ENCODE measurements at regions of chr14 and their contacts with region 1.

Region 1: DNA sequence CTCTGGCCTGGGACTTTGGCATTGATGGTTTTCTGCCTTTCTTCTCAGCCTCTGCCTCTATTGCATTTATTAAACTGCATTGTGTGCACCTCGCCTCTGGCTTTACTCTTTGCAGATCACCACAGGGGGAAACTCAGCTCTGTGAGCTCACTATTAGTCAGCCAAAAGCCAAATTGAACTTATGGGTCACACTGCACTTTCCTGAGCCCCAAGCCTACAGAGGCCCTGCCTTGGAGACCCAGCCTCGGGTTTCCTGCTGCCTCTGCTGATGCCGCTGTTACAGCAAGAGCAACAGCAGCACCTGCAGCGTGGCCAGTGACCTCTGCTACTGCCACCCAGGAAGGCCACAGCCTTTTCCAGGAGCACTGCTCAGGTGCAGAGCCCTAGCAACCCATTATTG is 122.5 kb downstream of the DAD1 start:
- DNase-seq: no peak
- ATAC-seq: no peak
- H3K4me3 ChIP-seq: no peak overlapping the region
- H3K27ac ChIP-seq: no peak overlapping the region
- H3K4me1 ChIP-seq: peaks cover 0 to 20% (median 7%) of the 10 kb centered on the region in 9 donors
- H3K27me3 ChIP-seq: no peaks in the 10 kb centered on the region
- CTCF ChIP-seq: no peak

Region 2: DNA sequence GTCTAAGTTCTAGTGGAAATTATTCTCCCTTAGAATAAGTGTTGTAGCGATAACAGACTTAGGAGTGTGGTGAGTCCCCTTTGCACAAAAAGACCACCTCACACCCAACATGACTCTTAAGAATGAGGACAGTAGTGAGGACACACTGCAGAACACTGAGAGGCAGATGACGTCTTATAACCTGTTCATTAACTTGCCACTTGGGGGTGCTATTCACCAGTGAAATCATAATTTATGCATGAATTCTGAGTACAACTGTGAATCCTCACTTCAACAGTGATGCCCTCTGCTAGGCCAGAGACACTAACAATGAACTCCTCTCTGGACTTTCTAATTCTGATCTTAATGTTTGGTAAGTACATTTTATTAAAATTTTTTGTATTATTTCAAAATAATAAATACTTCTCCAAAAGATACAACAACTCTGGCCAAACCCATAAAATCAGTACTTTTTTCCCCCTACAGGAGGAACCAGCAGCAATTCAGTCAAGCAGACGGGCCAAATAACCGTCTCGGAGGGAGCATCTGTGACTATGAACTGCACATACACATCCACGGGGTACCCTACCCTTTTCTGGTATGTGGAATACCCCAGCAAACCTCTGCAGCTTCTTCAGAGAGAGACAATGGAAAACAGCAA is 152.2 kb before region 1 on chr14:
- intact Hi-C with region 1: loop called in 1 of 10 experiments (anchors 10 kb)
- DNase-seq: peak in 1 of 2 donors; percentile 29
- ATAC-seq: peak in 6 of 8 donors; percentile 63 to 76 (median 70)
- H3K4me3 ChIP-seq: no peak overlapping the region
- H3K27ac ChIP-seq: no peak overlapping the region
- H3K4me1 ChIP-seq: no peaks in the 10 kb centered on the region
- H3K27me3 ChIP-seq: peaks cover 0 to 9% (median 0%) of the 10 kb centered on the region in 7 donors
- CTCF ChIP-seq: peak; percentile 32 to 82 (median 69)

Region 3: GRCh38 chr14:22397221-22397737 is 69.2 kb before region 1 on chr14:
- intact Hi-C with region 1: loop called in 3 of 10 experiments (anchors 2 to 5 kb)
- DNase-seq: no peak
- ATAC-seq: no peak
- H3K4me3 ChIP-seq: no peak overlapping the region
- H3K27ac ChIP-seq: no peak overlapping the region
- H3K4me1 ChIP-seq: peaks cover 0 to 7% (median 0%) of the 10 kb centered on the region in 9 donors
- H3K27me3 ChIP-seq: peaks cover 0 to 2% (median 0%) of the 10 kb centered on the region in 7 donors
- CTCF ChIP-seq: no peak

Region 4: DNA sequence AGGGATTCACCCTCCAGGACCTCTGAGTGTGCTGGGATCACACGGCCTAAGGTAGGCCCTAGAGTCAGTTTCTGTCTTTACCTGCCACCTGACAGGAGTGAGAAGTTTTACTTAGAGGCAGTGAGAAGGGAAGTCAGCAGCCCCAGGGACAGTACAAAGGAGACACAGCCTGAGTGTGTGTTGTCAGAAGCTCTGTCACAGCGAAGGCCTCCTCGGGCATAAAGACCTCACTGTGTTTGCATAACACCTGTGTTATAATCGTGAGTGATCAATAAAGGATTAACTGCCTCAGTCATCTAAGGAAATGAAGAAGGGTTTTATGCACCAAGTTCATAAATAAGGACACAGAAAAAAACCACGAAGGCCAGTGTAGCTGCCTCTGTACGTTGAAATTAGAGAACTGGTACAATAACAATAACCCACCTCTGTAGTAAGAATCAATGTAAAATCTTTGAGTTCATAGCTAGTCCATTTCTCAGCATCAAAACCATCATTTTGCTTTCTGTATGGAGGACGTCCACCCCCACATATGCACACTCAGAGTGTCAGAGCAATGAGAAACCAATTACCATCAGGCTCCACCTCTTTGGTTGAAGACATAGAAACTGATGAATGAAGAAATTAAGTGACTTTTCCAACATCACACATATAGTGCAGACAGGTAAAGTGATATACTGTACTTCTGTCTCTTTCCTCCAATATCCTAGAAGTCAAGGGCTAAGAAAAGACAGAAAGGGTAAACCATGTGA is 36.8 kb before region 1 on chr14:
- intact Hi-C with region 1: loop called in 1 of 10 experiments (anchors 1 kb)
- DNase-seq: no peak
- ATAC-seq: no peak
- H3K4me3 ChIP-seq: no peak overlapping the region
- H3K27ac ChIP-seq: peak overlapping the region in 1 of 10 donors; percentile 36
- H3K4me1 ChIP-seq: peaks cover 8 to 52% (median 36%) of the 10 kb centered on the region in 9 donors
- H3K27me3 ChIP-seq: no peaks in the 10 kb centered on the region
- CTCF ChIP-seq: no peak

Region 5: GRCh38 chr14:22531451-22532344 is 65.2 kb after region 1 on chr14:
- intact Hi-C with region 1: no loop called
- DNase-seq: no peak
- ATAC-seq: no peak
- H3K4me3 ChIP-seq: peak overlapping the region in 1 of 10 donors; percentile 8
- H3K27ac ChIP-seq: peak overlapping the region in 1 of 10 donors; percentile 55
- H3K4me1 ChIP-seq: peaks cover 0 to 31% (median 13%) of the 10 kb centered on the region in 9 donors
- H3K27me3 ChIP-seq: no peaks in the 10 kb centered on the region
- CTCF ChIP-seq: no peak

Measured in heart right ventricle (tissue), 16 donors.